Activated naive CD4-positive, alpha-beta T cell treated with anti-CD3 and anti-CD28 coated beads for 36 hours (primary cell): ENCODE measurements at regions of chr1 and their contacts with region 1.

Region 1: DNA sequence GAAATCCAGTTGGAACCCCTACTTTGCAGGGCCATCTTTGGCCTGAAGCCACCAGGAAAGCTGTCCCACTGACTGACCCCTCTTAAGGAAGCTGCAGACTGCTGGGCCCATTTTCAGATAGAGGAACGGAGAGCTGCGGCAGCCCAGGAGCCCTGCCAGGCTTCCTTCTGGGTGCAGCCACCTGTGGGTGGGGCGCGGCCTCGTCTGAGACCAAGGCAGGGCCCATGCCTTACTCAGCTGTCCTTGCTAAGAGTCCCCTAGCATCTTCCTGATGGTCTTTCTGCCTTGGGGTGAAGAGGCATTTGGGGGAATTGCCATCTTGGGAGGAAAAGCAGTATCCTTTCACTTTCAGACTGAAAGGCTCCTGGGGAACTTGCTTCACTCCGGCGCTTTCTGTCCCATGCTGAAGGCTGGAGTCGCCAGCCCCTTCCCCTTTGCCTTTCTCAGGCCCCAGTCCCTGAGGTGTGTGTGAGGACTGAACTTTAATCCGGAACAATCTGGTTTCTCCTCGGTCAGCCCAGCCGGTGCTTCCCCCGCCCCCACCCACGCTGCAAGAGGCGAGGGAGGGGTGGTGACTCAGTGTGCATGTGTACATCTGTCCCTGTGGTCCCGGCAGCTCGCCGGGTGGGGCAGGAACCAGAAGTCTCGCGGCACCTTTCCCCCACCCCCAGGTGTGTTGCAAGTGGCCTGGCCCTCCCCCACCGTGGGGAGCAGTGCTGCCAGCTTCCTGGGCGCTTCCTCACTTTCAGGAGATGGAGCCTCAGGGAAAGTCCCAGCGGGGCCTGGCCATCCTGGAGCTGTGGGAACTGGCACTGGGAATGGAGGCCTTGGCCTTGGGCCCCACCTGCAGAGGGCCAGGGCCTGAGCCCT is 5.1 kb downstream of the ZC3H12A start:
- DNase-seq: peak; percentile 97
- H3K4me3 Mint-ChIP-seq: peak overlapping the region; percentile 87
- H3K27ac Mint-ChIP-seq: peak overlapping the region; percentile 99
- H3K4me1 Mint-ChIP-seq: peaks cover 35% of the 10 kb centered on the region
- H3K27me3 Mint-ChIP-seq: no peaks in the 10 kb centered on the region

Region 2: GRCh38 chr1:36300526-36300925 is 1179.0 kb before region 1 on chr1:
- CTCF ChIA-PET with region 1: no interaction called
- intact Hi-C with region 1: loop called (anchors 1 kb)
- DNase-seq: peak; percentile 39
- H3K4me3 Mint-ChIP-seq: no peak overlapping the region
- H3K27ac Mint-ChIP-seq: peak overlapping the region; percentile 77
- H3K4me1 Mint-ChIP-seq: peaks cover 64% of the 10 kb centered on the region
- H3K27me3 Mint-ChIP-seq: no peaks in the 10 kb centered on the region

Region 3: GRCh38 chr1:37234941-37235418 is 244.5 kb before region 1 on chr1:
- CTCF ChIA-PET with region 1: no interaction called
- intact Hi-C with region 1: no loop called
- DNase-seq: no peak
- H3K4me3 Mint-ChIP-seq: no peak overlapping the region
- H3K27ac Mint-ChIP-seq: no peak overlapping the region
- H3K4me1 Mint-ChIP-seq: no peaks in the 10 kb centered on the region
- H3K27me3 Mint-ChIP-seq: peaks cover 29% of the 10 kb centered on the region

Region 4: GRCh38 chr1:37399205-37399604 is 80.3 kb before region 1 on chr1:
- CTCF ChIA-PET with region 1: no interaction called
- intact Hi-C with region 1: no loop called
- DNase-seq: no peak
- H3K4me3 Mint-ChIP-seq: no peak overlapping the region
- H3K27ac Mint-ChIP-seq: no peak overlapping the region
- H3K4me1 Mint-ChIP-seq: peaks cover 5% of the 10 kb centered on the region
- H3K27me3 Mint-ChIP-seq: peaks cover 15% of the 10 kb centered on the region

Region 5: DNA sequence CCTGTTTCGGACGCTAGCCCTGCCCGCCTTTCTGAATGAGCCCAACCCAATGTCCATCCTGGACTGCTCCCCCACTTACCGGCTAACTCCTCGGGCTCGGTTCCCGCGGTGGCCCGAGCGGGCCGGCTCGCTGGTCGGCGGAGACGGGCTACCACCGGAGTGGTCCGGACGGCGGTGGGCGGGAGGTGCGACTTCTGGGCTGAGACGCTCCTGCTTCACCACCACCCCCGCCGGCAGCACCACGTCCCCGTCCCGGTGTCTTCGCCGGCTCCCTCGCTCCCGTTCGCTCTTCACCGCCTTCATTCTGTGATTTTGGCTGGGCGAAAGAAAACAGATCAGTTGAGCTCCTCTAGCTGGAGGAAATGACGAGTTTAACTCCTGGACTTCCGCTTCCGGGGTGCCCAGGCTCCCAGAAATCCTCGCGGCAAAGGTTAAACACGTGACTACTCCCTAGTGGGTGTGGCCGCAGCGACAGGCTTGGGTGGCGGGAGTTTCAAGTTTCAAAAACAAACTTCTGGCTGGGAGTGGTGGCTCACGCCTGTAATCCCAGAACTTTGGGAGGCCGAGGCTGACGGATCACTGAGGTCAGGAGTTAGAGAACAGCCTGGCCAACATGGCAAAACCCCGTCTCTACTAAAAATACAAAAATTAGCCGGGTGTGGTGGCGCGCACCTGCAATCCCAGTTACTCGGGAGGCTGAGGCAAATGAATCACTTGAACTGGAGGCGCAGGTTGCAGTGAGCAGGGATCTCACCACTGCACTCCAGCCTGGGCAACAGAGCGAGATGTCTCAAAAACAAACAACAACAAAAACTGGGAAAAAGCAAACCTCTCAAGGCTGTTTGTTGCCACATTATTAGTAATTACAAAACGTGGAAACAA is 74.7 kb after region 1 on chr1 and contains the start of gene SNIP1:
- CTCF ChIA-PET with region 1: no interaction called
- intact Hi-C with region 1: loop called (anchors 1 kb)
- DNase-seq: peak; percentile 95
- H3K4me3 Mint-ChIP-seq: peak within 1 kb of the TSS; percentile 91
- H3K27ac Mint-ChIP-seq: peak within 1 kb of the TSS; percentile 86
- H3K4me1 Mint-ChIP-seq: peaks cover 44% of the 10 kb centered on the region
- H3K27me3 Mint-ChIP-seq: no peaks in the 10 kb centered on the region
- total RNA-seq, gene SNIP1: 14.3 to 15.3 TPM

Region 6: DNA sequence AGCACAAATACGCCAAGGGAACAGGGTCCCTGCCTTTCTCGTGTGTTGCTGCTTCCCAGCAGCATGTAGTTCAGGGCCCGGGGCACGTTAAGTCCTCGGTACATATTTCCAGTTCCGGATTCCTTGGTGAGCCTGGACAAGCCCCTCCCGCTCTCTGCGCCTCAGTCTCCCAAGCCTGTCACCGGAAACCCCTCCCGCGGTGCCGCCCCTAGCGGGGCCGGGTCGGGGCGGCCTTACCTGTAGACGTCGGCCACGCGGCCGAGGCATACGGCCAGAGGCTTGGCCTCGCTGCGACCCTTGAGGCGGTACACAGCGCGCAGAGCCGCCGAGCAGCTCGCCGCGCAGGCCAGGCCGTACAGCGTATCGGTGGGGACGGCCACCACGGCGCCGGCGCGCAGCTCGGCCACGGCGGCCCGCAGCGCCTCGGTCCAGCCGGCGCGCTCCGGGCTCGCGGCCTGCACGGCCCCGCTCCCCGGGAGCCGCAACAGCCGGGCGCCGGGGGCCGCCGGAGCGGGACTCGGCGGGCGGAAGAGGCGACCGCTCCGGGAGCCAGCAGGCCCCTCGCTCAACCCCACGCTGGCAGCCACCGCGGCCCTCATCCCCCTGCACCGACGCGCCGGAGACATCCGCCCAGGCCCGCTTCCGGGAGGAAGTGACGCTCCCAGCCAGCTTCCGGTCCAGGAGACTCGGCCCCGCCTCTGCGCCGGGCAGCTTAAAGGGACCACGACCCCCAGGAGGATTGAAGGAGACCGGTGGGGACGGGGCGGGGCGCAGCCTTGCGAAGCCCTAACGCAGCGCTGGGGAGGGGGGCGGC is 328.3 kb after region 1 on chr1 and contains the starts of genes C1orf122 and YRDC:
- CTCF ChIA-PET with region 1: no interaction called
- intact Hi-C with region 1: loop called (anchors 5 kb)
- DNase-seq: peak; percentile 92
- H3K4me3 Mint-ChIP-seq: peak within 1 kb of the TSS; percentile 95
- H3K27ac Mint-ChIP-seq: peak within 1 kb of the TSS; percentile 93
- H3K4me1 Mint-ChIP-seq: peaks cover 40% of the 10 kb centered on the region
- H3K27me3 Mint-ChIP-seq: no peaks in the 10 kb centered on the region
- total RNA-seq, gene C1orf122: 12.8 to 14.2 TPM
- total RNA-seq, gene YRDC: 31.6 to 31.7 TPM